H1 (cell line): ENCODE measurements at regions of chr1 and their contacts with region 1.

Region 1: DNA sequence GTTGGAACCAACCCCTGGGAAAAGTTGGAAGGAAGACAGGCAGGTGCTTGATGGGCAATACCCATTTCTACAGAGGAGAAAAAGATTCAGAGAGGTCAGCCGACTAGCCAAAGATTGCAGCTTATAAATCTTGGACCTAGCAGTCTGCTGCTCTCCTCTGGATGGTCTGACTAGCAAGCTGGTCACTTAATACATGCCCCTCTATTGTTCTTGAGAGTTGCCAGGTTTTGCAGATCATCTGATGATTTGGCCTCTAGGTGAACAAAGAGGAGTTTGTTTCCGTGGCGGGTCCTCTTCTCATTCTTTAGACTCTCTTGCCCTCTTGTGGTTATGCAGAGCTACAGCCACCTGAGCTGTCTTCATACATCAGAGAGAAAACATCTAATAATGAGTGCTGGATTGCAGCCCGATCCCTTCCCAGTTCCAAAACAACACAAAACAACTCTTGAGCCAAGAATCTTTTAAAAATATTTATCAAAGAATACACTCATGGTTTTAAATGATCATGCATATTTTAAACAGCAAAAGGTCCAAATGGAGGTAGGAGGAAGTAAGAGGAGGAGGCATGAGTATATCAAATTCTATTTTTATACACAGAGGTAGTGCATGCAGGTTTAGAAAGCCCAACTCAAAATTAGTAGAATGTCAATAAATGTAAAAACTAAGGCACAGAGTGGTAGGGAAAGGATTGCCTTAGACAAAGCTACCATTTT is 115.7 kb downstream of the SLC30A10 start:
- DNase-seq: peak; percentile 57 to 67
- H3K4me3 ChIP-seq: no peak overlapping the region
- H3K27ac ChIP-seq: no peak overlapping the region
- H3K4me1 ChIP-seq: peaks cover 0 to 5% (median 2%) of the 10 kb centered on the region in 4 experiments; a peak in 2 of 7 replicates
- H3K27me3 ChIP-seq: no peaks in the 10 kb centered on the region
- CTCF ChIP-seq: peak in 2 of 3 experiments; percentile 86 to 93; a peak in 3 of 4 replicates
- EP300 ChIP-seq: no peak
- POLR2A ChIP-seq: no peak
- RAD21 ChIP-seq: peak; percentile 96

Region 2: GRCh38 chr1:219660666-219661463 is 151.8 kb before region 1 on chr1:
- CTCF ChIA-PET with region 1: interaction called, 26 read pairs
- POLR2A ChIA-PET with region 1: no interaction called
- DNase-seq: peak; percentile 81 to 91
- H3K4me3 ChIP-seq: peak overlapping the region; percentile 11 to 55 (median 38); a peak in 7 of 8 replicates
- H3K27ac ChIP-seq: peak overlapping the region; percentile 49
- H3K4me1 ChIP-seq: peaks cover 0 to 8% (median 3%) of the 10 kb centered on the region in 4 experiments; a peak in 5 of 7 replicates
- H3K27me3 ChIP-seq: no peaks in the 10 kb centered on the region
- CTCF ChIP-seq: peak; percentile 83 to 94 (median 93)
- EP300 ChIP-seq: peak in 1 of 2 experiments; percentile 28; a peak in 1 of 3 replicates
- POLR2A ChIP-seq: peak in 1 of 2 experiments; percentile 36; a peak in 1 of 3 replicates
- RAD21 ChIP-seq: peak; percentile 94 to 96

Region 3: DNA sequence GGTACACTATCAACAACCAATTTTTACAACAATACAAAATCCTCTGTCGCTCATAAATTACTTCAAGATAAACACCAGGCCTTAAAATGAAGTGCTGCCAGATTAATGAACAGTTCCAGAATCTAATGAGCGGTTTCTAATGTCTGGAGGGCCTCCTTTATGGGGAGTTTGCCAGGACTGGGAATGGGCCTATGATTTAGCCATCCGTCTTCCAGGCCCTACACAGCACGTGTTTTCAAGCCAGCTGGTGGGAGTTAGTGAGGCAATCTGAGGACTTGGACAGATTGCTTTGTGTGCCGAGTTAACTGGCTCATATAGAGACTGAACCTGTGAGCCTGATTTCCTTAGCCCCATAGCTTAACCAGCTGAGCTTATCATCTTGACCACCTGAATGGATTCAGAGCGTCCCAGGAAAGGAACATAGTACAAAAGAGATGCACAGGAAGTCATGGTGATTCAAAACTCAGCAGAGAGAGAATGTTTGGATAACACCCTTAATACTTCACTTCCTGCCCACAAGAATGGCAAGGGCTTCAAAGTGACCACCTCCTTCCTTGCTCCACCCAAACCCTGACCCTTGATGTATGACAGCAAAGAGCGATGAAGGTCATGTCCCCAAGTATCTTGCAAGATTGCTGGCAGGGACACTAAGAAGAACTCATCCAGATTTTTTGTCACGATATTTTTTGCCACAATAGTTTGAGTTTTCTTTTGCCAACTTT is 27.8 kb before region 1 on chr1:
- CTCF ChIA-PET with region 1: interaction called, 10 read pairs
- POLR2A ChIA-PET with region 1: no interaction called
- DNase-seq: no peak
- H3K4me3 ChIP-seq: no peak overlapping the region
- H3K27ac ChIP-seq: no peak overlapping the region
- H3K4me1 ChIP-seq: no peaks in the 10 kb centered on the region; a peak in 1 of 7 replicates
- H3K27me3 ChIP-seq: no peaks in the 10 kb centered on the region
- CTCF ChIP-seq: no peak
- EP300 ChIP-seq: no peak
- POLR2A ChIP-seq: no peak
- RAD21 ChIP-seq: no peak

Region 4: DNA sequence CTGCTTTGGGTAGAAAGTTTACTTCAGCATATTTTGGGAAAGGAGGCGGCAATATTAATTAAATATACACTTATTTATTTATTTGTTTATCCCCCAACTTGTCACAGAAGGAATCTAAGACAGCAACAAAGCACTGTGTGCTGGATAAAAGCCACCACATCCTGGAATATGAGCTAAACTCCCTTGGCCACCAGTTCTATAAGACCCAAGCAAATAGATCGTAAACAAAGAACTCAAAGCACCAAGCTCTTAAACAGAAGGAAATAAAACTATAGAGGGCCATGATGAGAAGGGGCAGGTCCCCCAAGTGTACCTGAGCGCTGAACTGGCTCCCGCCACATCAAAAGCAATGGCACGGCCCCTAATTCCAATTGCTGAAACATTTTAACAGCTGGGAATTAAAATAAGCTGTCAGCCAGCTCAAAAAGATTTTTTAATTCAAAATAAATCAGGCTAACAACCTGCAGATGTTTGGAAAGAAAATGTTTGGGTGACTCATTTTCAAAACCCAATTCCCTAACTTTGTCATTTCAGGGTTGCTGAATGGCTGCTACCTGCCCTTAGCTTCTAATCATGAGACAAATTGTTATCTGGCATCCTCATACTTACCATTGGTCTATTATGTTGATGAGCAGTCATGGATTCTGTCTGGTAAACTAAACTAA is 11.4 kb before region 1 on chr1:
- CTCF ChIA-PET with region 1: interaction called, 11 read pairs
- POLR2A ChIA-PET with region 1: no interaction called
- DNase-seq: no peak
- H3K4me3 ChIP-seq: no peak overlapping the region
- H3K27ac ChIP-seq: no peak overlapping the region
- H3K4me1 ChIP-seq: no peaks in the 10 kb centered on the region
- H3K27me3 ChIP-seq: no peaks in the 10 kb centered on the region
- CTCF ChIP-seq: no peak
- EP300 ChIP-seq: no peak
- POLR2A ChIP-seq: no peak
- RAD21 ChIP-seq: no peak

Region 5: GRCh38 chr1:219824338-219824737 is 11.7 kb after region 1 on chr1:
- CTCF ChIA-PET with region 1: interaction called, 36 read pairs
- POLR2A ChIA-PET with region 1: no interaction called
- DNase-seq: no peak
- H3K4me3 ChIP-seq: no peak overlapping the region
- H3K27ac ChIP-seq: no peak overlapping the region
- H3K4me1 ChIP-seq: peaks cover 3 to 6% (median 5%) of the 10 kb centered on the region in 4 experiments; a peak in 4 of 7 replicates
- H3K27me3 ChIP-seq: no peaks in the 10 kb centered on the region
- CTCF ChIP-seq: no peak
- EP300 ChIP-seq: no peak
- POLR2A ChIP-seq: no peak
- RAD21 ChIP-seq: no peak